ENCODE measurements at regions of chr6 and their contacts with region 1.

Region 1: DNA sequence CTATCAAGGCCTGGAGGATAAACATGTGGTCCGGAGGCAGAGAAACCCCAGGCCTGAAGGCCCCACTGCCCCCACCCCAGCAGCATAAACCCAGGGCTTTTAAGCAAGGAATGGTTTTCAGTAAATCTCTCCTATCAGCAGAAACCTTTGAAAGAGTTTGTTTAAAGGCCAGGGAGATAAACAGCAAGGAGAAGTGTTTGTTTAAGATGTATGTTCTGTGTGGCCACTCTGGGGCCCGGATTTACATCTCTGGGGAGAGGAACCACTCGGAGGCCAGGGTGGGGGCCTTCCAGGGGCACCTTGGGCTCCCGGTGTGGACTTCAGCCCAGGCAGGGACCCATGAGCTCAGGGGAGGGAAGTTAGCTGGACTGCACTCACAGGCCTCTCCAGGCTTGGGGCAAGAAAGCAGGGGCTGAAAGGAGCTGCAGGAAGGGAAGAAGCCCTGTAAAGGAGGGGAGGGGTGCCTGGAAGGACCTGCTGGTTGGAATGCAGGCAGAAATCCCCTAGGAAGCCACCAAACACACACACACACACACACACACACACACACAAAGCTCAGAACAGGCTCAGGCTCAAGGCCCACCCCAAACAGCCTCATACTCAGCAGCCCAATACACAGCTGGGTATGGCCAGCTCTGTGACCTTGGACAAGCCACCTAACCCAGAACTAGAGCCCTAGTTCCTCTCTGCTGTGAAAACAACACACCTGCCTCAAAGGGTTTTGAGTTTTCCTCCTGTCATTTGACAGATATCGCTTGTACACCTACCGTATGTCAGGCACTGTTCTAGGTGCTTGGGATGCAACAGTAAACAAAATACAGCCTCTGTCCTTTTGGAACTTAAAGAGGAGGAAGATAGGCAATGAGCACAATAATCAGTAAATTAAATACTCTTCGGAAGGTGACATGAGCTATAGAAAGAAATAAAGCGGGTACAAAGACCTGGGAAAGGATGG is 26.2 kb upstream of the FOXP4 start:
- DNase-seq: peak; percentile 97 to 98
- H3K4me3 ChIP-seq: no peak overlapping the region
- H3K4me3 Mint-ChIP-seq: peak overlapping the region; percentile 69
- H3K27ac Mint-ChIP-seq: peak overlapping the region; percentile 95
- H3K4me1 ChIP-seq: peaks cover 65% of the 10 kb centered on the region
- H3K4me1 Mint-ChIP-seq: peaks cover 72% of the 10 kb centered on the region
- H3K27me3 ChIP-seq: no peaks in the 10 kb centered on the region
- H3K27me3 Mint-ChIP-seq: no peaks in the 10 kb centered on the region
- CTCF ChIP-seq: no peak

Region 2: GRCh38 chr6:41455818-41456217 is 64.2 kb before region 1 on chr6:
- CTCF ChIA-PET with region 1: interaction called, 4 read pairs
- POLR2A ChIA-PET with region 1: interaction called, 3 read pairs
- intact Hi-C with region 1: loop called (anchors 1 kb)
- DNase-seq: peak; percentile 40 to 68
- H3K4me3 ChIP-seq: no peak overlapping the region
- H3K4me3 Mint-ChIP-seq: peak overlapping the region; percentile 52
- H3K27ac Mint-ChIP-seq: peak overlapping the region; percentile 96
- H3K4me1 ChIP-seq: peaks cover 60% of the 10 kb centered on the region
- H3K4me1 Mint-ChIP-seq: peaks cover 37% of the 10 kb centered on the region
- H3K27me3 ChIP-seq: no peaks in the 10 kb centered on the region
- H3K27me3 Mint-ChIP-seq: no peaks in the 10 kb centered on the region
- CTCF ChIP-seq: no peak

Region 3: DNA sequence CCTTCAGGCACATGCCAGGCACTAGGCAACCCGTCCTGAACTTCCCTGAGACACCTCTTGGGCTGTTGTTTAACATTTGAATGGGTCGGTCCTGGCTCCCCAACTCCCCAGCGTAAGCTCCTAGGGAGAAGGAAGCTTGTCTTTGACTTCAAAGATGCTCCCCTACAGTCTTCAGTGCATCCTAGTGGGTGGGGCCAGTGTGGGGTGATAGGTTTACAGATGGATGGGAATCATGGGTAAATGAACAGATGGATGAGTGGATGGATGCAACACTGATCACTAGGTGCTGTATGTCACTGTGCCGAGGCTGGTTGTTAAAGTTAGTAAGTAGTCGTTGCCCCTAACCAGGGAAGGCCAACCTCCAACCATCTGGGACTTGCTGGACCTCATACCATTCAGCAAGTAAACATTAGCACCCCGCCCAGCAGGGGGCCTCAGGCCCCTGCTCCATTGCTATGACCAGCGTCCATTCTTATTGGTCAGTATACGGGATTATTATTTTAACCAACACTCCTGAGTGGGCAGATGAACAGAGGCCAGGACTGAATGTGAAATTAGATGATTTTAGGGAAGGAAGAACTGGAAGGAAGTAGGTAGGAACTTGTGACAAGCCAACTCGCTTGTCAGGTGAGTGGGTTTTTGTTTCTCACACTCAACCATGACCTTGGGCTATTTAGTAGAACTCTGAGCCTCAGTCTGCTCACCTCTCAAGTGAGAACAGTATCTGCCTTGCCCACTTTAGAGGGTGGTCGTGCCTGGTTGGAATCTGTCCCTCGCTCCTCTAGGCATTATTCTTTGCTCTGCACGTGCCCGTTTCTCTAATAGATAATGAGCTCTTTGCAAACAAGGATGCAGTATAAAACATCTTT is 56.7 kb before region 1 on chr6:
- CTCF ChIA-PET with region 1: interaction called, 10 read pairs
- POLR2A ChIA-PET with region 1: no interaction called
- intact Hi-C with region 1: loop called (anchors 1 kb)
- DNase-seq: peak; percentile 79 to 84
- H3K4me3 ChIP-seq: no peak overlapping the region
- H3K4me3 Mint-ChIP-seq: no peak overlapping the region
- H3K27ac Mint-ChIP-seq: no peak overlapping the region
- H3K4me1 ChIP-seq: peaks cover 47% of the 10 kb centered on the region
- H3K4me1 Mint-ChIP-seq: peaks cover 46% of the 10 kb centered on the region
- H3K27me3 ChIP-seq: no peaks in the 10 kb centered on the region
- H3K27me3 Mint-ChIP-seq: no peaks in the 10 kb centered on the region
- CTCF ChIP-seq: peak; percentile 65 to 81

Region 4: DNA sequence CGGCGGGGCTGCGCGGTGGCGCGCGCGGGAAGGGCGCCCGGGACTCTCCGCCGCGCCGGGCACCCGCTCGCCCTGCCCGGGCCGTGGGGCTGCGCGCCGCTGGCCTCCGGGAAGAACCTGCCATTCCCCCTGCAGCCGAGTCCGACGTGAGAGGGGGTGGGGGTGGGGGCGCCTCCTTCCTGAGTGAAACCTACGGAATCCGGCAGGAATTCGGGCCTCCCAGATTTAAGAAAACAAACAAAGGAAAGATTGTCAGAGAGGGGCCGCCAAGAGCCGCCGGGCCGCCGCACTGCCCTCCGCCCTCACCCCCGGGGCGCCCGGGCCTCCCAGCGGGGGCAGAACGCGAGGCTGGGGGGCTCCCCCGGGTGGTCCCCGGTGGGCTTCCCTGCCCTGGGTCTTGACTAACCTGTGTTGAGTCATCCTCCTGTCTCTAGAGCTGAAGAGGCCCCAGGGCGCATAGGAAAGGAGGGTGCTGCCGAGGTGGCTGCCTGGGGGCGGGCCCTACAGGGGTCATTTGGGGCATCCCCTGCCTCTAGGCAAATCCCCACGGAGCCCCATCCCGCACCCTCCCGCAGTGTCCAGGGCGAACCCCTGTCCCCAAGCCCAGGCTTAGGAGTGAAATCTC is 16.1 kb before region 1 on chr6:
- CTCF ChIA-PET with region 1: interaction called, 6 read pairs
- POLR2A ChIA-PET with region 1: interaction called, 3 read pairs
- intact Hi-C with region 1: loop called (anchors 1 kb)
- DNase-seq: peak; percentile 74 to 86
- H3K4me3 ChIP-seq: peak overlapping the region; percentile 33
- H3K4me3 Mint-ChIP-seq: peak overlapping the region; percentile 61
- H3K27ac Mint-ChIP-seq: peak overlapping the region; percentile 88
- H3K4me1 ChIP-seq: peaks cover 36% of the 10 kb centered on the region
- H3K4me1 Mint-ChIP-seq: peaks cover 44% of the 10 kb centered on the region
- H3K27me3 ChIP-seq: no peaks in the 10 kb centered on the region
- H3K27me3 Mint-ChIP-seq: no peaks in the 10 kb centered on the region
- CTCF ChIP-seq: no peak

Region 5: DNA sequence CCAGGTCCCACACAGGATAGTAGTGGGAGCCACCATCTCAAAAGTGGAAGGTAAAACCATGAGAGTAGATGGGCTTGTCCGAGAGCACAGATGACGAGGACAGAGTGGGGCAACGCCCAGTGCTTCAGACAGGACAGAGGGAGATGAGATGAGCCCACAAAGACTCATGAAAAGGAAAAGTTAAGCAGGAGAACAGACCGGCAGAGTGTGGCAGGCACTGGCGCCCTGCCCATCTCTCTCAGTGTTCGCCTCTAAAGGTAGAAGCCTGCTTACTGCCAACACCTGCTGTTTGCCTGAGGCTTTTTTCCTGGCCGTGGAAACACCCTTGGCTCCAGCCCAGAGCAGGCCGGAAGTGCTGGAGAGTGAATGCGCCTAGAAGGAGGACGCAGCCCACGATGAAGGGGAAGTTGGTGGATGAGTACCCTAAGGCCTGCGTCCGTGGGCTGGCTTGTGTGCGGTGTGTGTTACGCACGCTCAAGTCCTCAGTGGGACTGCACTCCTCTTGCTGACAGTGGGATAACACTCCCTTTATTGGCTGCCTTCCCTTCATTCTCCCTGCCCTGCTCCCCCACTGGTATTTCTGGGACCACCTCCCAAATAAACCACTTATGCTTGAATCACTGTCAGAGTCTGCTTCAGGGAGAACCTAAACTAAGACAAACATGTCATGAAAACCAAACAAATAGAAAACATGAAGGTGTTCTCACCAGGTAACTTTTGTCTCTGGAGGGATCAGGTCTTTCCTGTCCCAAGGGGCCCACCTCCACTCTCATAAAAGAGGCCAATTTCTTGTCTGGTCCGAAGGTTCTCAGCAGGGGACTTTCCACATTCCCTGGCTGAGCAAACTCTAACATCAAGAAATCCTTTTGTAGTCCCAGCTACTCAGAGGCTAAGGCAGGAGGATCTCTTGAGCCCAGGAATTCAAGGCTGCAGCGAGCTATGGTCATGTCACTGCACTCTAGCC is 17.1 kb after region 1 on chr6:
- CTCF ChIA-PET with region 1: interaction called, 3 read pairs
- POLR2A ChIA-PET with region 1: interaction called, 4 read pairs
- intact Hi-C with region 1: loop called (anchors 1 kb)
- DNase-seq: peak; percentile 76 to 79
- H3K4me3 ChIP-seq: no peak overlapping the region
- H3K4me3 Mint-ChIP-seq: peak overlapping the region; percentile 39
- H3K27ac Mint-ChIP-seq: peak overlapping the region; percentile 86
- H3K4me1 ChIP-seq: peaks cover 45% of the 10 kb centered on the region
- H3K4me1 Mint-ChIP-seq: peaks cover 49% of the 10 kb centered on the region
- H3K27me3 ChIP-seq: no peaks in the 10 kb centered on the region
- H3K27me3 Mint-ChIP-seq: no peaks in the 10 kb centered on the region
- CTCF ChIP-seq: no peak

Region 6: GRCh38 chr6:41545703-41546474 is 25.9 kb after region 1 on chr6 and contains the start of gene FOXP4:
- CTCF ChIA-PET with region 1: interaction called, 3 read pairs
- POLR2A ChIA-PET with region 1: interaction called, 4 read pairs
- intact Hi-C with region 1: loop called (anchors 1 kb)
- DNase-seq: peak; percentile 90 to 94
- H3K4me3 ChIP-seq: peak within 1 kb of the TSS; percentile 95
- H3K4me3 Mint-ChIP-seq: peak within 1 kb of the TSS; percentile 91
- H3K27ac Mint-ChIP-seq: peak within 1 kb of the TSS; percentile 88
- H3K4me1 ChIP-seq: peaks cover 41% of the 10 kb centered on the region
- H3K4me1 Mint-ChIP-seq: peaks cover 29% of the 10 kb centered on the region
- H3K27me3 ChIP-seq: no peaks in the 10 kb centered on the region
- H3K27me3 Mint-ChIP-seq: no peaks in the 10 kb centered on the region
- CTCF ChIP-seq: no peak
- total RNA-seq, gene FOXP4: 108 and 117 TPM in 2 replicates

Region 7: DNA sequence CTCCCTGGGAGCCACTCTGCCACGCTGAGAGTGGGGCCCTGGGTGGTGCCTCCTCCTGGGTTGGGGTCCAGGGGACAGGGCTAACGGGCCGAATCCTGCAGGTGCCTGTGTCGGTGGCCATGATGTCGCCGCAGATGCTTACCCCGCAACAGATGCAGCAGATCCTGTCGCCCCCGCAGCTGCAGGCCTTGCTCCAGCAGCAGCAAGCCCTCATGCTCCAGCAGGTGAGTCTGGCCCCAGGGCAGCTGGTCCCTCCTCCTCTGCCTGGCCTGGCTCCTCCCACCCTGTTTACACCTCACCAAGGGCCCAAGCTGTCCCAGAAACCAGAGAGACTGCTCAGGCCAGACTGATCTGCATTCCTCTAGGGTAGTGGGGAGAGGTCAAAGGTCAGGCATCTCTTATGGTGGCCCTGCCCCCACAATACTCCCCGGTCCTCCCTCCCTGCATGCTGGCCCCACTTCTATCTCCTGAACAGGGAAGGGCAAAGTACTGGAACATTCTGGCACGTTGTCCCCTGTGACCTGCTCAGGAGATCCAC is 64.7 kb after region 1 on chr6:
- CTCF ChIA-PET with region 1: no interaction called
- POLR2A ChIA-PET with region 1: no interaction called
- intact Hi-C with region 1: loop called (anchors 1 kb)
- DNase-seq: peak; percentile 88 to 91
- H3K4me3 ChIP-seq: no peak overlapping the region
- H3K4me3 Mint-ChIP-seq: peak overlapping the region; percentile 9
- H3K27ac Mint-ChIP-seq: peak overlapping the region; percentile 11
- H3K4me1 ChIP-seq: peaks cover 54% of the 10 kb centered on the region
- H3K4me1 Mint-ChIP-seq: peaks cover 28% of the 10 kb centered on the region
- H3K27me3 ChIP-seq: no peaks in the 10 kb centered on the region
- H3K27me3 Mint-ChIP-seq: no peaks in the 10 kb centered on the region
- CTCF ChIP-seq: no peak